ENCODE measurements at regions of chr15 and their contacts with region 1.

Region 1: DNA sequence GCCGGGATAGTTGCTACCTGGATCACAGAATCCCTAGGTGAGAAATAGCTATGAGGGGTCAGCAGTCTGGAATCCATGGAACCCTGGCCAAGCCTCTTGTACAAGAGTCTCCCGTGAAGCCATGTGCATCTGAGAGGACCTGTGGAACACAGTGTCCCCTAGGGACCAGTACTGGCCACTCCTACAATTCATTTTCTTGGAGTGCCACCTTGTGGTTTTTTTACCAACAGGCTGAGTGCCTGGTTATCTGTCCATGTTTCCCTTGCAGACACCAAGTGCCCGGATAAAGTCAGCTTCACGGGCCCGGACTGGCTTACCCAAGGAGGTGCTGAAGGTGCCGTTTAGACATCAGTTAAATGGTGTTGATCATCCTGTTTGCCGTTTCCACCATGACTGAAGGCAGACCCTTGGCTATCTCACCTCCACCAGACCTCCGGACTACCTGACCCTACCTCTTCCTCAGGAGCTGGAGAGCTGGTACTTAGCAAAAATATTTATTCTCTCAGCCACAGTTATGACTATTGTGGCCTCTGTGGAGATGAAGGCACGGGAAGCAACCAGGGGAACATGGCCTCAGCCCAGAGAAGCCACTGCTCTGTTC is 93.9 kb downstream of the RBPMS2 start:
- DNase-seq: no peak
- ATAC-seq: peak; percentile 28
- H3K4me3 Mint-ChIP-seq: no peak overlapping the region
- H3K27ac Mint-ChIP-seq: no peak overlapping the region
- H3K4me1 Mint-ChIP-seq: no peaks in the 10 kb centered on the region
- H3K27me3 Mint-ChIP-seq: no peaks in the 10 kb centered on the region
- CTCF ChIP-seq: no peak

Region 2: GRCh38 chr15:64426845-64427465 is 254.6 kb before region 1 on chr15:
- CTCF ChIA-PET with region 1: interaction called, 3 read pairs
- POLR2A ChIA-PET with region 1: no interaction called
- intact Hi-C with region 1: loop called (anchors 1 kb)
- DNase-seq: no peak
- ATAC-seq: no peak
- H3K4me3 Mint-ChIP-seq: no peak overlapping the region
- H3K27ac Mint-ChIP-seq: no peak overlapping the region
- H3K4me1 Mint-ChIP-seq: peaks cover 13% of the 10 kb centered on the region
- H3K27me3 Mint-ChIP-seq: no peaks in the 10 kb centered on the region
- CTCF ChIP-seq: no peak

Region 3: GRCh38 chr15:64695561-64695992 is 14.1 kb after region 1 on chr15:
- CTCF ChIA-PET with region 1: interaction called, 16 read pairs
- POLR2A ChIA-PET with region 1: interaction called, 3 read pairs
- intact Hi-C with region 1: no loop called
- DNase-seq: peak; percentile 23
- ATAC-seq: peak; percentile 93
- H3K4me3 Mint-ChIP-seq: peak overlapping the region; percentile 40
- H3K27ac Mint-ChIP-seq: peak overlapping the region; percentile 83
- H3K4me1 Mint-ChIP-seq: peaks cover 73% of the 10 kb centered on the region
- H3K27me3 Mint-ChIP-seq: no peaks in the 10 kb centered on the region
- CTCF ChIP-seq: no peak

Region 4: DNA sequence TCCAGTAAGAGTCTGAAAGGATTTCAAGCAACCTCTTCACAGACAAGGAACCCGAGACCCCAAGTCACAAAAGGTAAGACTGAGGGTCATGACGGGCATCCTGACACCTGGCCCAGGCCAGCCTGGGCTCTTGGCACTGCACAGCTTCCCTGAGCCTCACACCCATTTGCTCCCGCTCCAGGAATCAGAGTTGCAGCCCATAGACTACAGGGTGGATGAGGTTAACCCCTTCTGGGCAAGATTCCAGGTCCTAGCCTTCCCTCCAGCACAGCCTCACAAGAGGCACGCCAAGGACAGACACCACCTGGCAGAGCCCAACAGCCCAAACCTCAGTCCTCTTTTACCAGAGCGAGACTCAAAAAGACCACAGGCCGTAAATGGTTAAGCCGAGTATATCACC is 57.6 kb after region 1 on chr15:
- CTCF ChIA-PET with region 1: no interaction called
- POLR2A ChIA-PET with region 1: no interaction called
- intact Hi-C with region 1: no loop called
- DNase-seq: no peak
- ATAC-seq: no peak
- H3K4me3 Mint-ChIP-seq: no peak overlapping the region
- H3K27ac Mint-ChIP-seq: no peak overlapping the region
- H3K4me1 Mint-ChIP-seq: no peaks in the 10 kb centered on the region
- H3K27me3 Mint-ChIP-seq: no peaks in the 10 kb centered on the region
- CTCF ChIP-seq: no peak

Measured in activated B cell treated with CpG ODN at 0.5 μM for 24 hours (primary cell).